ENCODE measurements at regions of chr14 and their contacts with region 1.

Region 1: DNA sequence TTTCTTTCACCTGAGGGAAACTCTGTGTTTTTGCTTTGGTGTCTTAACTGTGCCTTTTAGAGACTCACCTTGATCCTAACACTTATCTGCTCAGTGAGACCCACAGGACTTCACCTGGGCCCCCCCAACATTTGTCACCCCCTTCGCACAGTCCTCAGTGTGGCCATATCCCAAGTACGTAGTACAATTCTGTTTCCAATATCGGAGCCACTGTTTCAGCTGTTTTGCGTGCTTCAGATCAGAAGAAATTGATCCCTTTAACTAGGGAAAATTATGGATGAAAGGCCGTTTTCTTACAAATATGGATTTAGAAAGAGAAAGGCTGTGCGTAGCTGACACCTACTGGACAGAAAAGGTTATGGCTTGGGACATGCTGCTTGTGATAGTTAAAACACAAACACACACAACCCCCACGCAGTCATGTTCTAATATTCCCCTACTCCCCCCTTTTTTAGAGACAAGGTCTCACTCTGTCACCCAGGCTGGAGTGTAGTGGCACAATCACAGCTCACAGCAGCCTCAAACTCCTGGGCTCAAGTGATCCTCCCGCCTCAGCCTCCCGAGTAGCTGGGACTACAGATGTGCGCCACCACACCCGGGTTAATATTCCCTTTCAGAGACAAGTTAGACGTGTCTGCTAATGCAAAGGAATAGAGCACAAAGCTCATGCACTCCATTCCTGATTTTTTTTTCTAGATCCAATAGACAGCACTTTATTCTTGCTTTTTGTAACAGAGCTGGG is 3.6 kb upstream of the SLC7A8 start:
- DNase-seq: peak; percentile 44
- H3K4me3 ChIP-seq: no peak overlapping the region
- H3K27ac ChIP-seq: no peak overlapping the region
- H3K4me1 ChIP-seq: peaks cover 8% of the 10 kb centered on the region
- H3K27me3 ChIP-seq: no peaks in the 10 kb centered on the region
- CTCF ChIP-seq: peak; percentile 85 to 86

Region 2: DNA sequence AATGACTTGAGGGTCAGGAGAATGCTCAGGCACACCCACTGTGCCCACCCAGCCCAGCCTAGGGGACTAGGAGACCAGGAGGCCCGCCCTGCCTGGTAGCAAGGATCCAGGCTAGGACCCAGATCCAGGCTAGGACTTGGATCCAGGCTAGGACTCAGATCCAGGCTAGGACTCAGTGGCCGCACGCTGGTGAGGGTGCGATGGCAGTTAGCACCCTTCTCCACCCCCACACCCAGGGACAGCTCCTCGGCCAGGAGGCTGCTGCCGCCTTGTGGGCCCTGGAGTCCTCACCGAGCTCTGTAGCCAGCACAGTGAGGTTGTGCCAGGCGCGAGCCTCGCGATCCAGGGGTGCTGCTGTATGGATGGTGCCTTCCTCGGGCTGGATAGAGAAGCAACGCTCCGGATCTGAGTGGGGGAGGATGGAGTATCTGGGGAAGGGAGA is 134.9 kb before region 1 on chr14:
- CTCF ChIA-PET with region 1: no interaction called
- dilution Hi-C with region 1: no loop called
- in situ Hi-C with region 1: no loop called
- intact Hi-C with region 1: no loop called
- DNase-seq: peak; percentile 40
- H3K4me3 ChIP-seq: no peak overlapping the region
- H3K27ac ChIP-seq: no peak overlapping the region
- H3K4me1 ChIP-seq: peaks cover 15% of the 10 kb centered on the region
- H3K27me3 ChIP-seq: no peaks in the 10 kb centered on the region
- CTCF ChIP-seq: peak; percentile 29 to 60

Region 3: DNA sequence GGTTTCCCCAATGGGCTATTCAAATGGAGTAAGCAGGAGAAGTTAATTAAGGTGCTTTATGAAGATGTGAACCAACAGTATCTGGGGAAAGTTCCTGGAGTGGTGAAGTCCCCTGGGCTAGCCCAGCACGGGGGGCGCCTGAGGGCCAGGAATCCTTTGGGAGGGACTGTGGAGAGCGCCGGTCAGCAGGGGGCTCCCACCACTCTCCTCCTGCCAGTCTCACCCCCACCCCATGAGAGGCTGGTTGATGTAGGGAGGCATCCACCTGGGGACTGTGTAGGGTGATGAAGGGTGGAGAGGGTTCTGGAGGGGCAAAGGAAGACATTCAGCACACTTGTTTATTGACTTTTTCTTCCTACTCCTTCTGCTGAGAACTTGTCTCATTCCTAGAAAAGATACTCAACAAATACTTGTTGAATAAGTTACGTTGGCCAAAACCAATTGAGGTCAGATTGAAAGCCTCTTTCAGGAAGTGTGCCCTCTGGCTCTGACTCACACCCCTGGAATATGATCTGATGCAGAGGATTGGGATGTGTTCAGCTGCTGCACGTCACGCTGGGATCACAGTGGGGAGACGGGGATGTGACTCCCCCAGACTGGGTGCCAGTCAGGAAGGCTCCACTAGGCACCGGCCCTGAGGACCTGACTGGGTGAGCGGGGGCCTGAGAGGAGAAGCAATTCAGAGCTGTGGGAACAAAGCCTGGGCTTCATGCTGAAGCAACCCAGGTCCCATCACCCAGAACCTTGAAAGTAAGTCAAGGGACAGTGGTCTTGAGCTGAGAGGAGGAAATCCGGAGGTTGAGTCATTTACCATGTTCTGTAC is 72.2 kb before region 1 on chr14:
- CTCF ChIA-PET with region 1: interaction called, 6 read pairs
- dilution Hi-C with region 1: no loop called
- in situ Hi-C with region 1: loop called (anchors 5 kb)
- intact Hi-C with region 1: loop called (anchors 1 kb)
- DNase-seq: peak; percentile 96
- H3K4me3 ChIP-seq: no peak overlapping the region
- H3K27ac ChIP-seq: peak overlapping the region; percentile 86
- H3K4me1 ChIP-seq: peaks cover 23% of the 10 kb centered on the region
- H3K27me3 ChIP-seq: no peaks in the 10 kb centered on the region
- CTCF ChIP-seq: no peak

Region 4: DNA sequence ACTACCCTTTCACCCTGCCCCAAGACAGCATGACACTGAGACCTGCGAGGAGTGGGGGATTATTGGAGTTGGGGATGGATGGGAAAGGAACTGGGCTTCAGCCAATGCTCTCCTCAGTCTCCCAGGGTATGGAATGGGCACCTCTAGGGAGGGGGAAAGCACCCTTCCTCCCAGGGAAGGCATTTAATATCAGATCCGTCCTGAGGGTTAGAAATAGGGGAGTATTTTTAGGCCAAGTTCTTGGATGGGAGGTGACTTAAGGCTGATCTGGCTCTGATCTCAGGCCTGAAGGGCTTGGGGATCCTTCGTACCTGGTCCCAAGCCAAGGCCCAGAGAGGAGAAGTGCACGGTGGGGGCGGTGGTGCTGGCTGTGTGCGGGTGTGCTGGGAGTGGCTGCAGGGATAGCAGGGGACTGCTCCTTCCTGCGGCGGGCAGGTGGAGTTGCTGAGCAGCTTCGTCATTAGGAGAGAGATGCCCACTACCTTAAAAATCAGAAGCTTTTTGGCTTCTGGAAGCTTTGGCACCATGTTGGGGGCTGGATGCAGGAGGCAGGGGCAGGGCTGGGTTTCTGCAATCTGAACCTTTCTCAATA is 61.1 kb before region 1 on chr14:
- CTCF ChIA-PET with region 1: interaction called, 28 read pairs
- dilution Hi-C with region 1: loop called (anchors 5 kb)
- in situ Hi-C with region 1: loop called in 1 of 2 experiments (anchors 5 kb)
- intact Hi-C with region 1: no loop called
- DNase-seq: no peak
- H3K4me3 ChIP-seq: no peak overlapping the region
- H3K27ac ChIP-seq: no peak overlapping the region
- H3K4me1 ChIP-seq: peaks cover 13% of the 10 kb centered on the region
- H3K27me3 ChIP-seq: no peaks in the 10 kb centered on the region
- CTCF ChIP-seq: no peak

Region 5: GRCh38 chr14:23174276-23175184 is 12.6 kb before region 1 on chr14:
- CTCF ChIA-PET with region 1: no interaction called
- dilution Hi-C with region 1: no loop called
- in situ Hi-C with region 1: no loop called
- intact Hi-C with region 1: loop called (anchors 1 kb)
- DNase-seq: peak; percentile 73
- H3K4me3 ChIP-seq: no peak overlapping the region
- H3K27ac ChIP-seq: no peak overlapping the region
- H3K4me1 ChIP-seq: peaks cover 54% of the 10 kb centered on the region
- H3K27me3 ChIP-seq: no peaks in the 10 kb centered on the region
- CTCF ChIP-seq: no peak